ENCODE measurements at regions of chr2 and their contacts with region 1.

Region 1: DNA sequence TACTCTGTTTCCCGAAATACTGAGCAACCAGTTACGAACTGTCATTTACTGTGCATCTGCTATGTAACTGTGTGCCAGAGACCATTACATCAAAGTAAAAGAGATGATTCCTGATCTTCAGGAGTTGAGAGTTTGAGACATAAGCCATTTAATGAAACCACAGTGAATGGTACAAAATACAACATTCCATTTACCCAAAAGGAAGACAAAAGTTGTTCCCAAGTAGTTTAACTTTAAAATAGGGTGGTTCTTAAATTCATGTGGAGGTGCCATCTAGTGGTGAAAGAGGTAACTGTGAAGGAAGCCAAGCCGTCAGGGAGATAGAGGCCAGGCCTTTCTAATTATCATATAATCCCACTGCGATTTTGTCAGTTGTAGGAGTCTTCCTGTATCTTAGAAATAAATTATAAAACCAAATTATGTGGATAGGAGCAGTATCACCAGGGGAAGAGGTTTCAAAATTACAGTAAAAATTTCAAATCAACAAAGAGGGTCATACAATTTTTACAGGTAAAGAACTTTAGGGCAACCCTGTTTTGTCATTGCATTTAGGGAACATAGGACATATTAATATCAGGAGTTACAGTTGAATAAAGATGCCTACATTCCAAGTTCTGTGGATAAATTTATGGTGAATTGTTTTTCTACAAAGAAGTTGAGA is 67.7 kb downstream of the EPAS1 start:
- DNase-seq: peak in 5 of 14 experiments; percentile 14 to 74 (median 64)
- ATAC-seq: peak; percentile 60
- H3K4me3 ChIP-seq: no peak overlapping the region
- H3K4me3 Mint-ChIP-seq: no peak overlapping the region
- H3K27ac ChIP-seq: no peak overlapping the region
- H3K27ac Mint-ChIP-seq: no peak overlapping the region
- H3K4me1 ChIP-seq: peaks cover 12% of the 10 kb centered on the region
- H3K4me1 Mint-ChIP-seq: peaks cover 37% of the 10 kb centered on the region
- H3K27me3 ChIP-seq: no peaks in the 10 kb centered on the region
- H3K27me3 Mint-ChIP-seq: no peaks in the 10 kb centered on the region
- CTCF ChIP-seq: peak; percentile 86

Region 2: GRCh38 chr2:45993476-45993991 is 371.4 kb before region 1 on chr2:
- CTCF ChIA-PET with region 1: interaction called, 3 read pairs
- POLR2A ChIA-PET with region 1: no interaction called
- intact Hi-C with region 1: loop called (anchors 1 to 5 kb)
- DNase-seq: peak in 13 of 14 experiments; percentile 8 to 80 (median 42)
- ATAC-seq: peak; percentile 68
- H3K4me3 ChIP-seq: no peak overlapping the region
- H3K4me3 Mint-ChIP-seq: no peak overlapping the region
- H3K27ac ChIP-seq: no peak overlapping the region
- H3K27ac Mint-ChIP-seq: no peak overlapping the region
- H3K4me1 ChIP-seq: no peaks in the 10 kb centered on the region
- H3K4me1 Mint-ChIP-seq: peaks cover 6% of the 10 kb centered on the region
- H3K27me3 ChIP-seq: no peaks in the 10 kb centered on the region
- H3K27me3 Mint-ChIP-seq: no peaks in the 10 kb centered on the region
- CTCF ChIP-seq: peak; percentile 80

Region 3: GRCh38 chr2:46062637-46063412 is 302.1 kb before region 1 on chr2:
- CTCF ChIA-PET with region 1: interaction called, 3 read pairs
- POLR2A ChIA-PET with region 1: no interaction called
- intact Hi-C with region 1: loop called (anchors 1 kb)
- DNase-seq: peak; percentile 41 to 74 (median 57)
- ATAC-seq: peak; percentile 52
- H3K4me3 ChIP-seq: no peak overlapping the region
- H3K4me3 Mint-ChIP-seq: no peak overlapping the region
- H3K27ac ChIP-seq: no peak overlapping the region
- H3K27ac Mint-ChIP-seq: no peak overlapping the region
- H3K4me1 ChIP-seq: no peaks in the 10 kb centered on the region
- H3K4me1 Mint-ChIP-seq: no peaks in the 10 kb centered on the region
- H3K27me3 ChIP-seq: no peaks in the 10 kb centered on the region
- H3K27me3 Mint-ChIP-seq: no peaks in the 10 kb centered on the region
- CTCF ChIP-seq: peak; percentile 88

Region 4: DNA sequence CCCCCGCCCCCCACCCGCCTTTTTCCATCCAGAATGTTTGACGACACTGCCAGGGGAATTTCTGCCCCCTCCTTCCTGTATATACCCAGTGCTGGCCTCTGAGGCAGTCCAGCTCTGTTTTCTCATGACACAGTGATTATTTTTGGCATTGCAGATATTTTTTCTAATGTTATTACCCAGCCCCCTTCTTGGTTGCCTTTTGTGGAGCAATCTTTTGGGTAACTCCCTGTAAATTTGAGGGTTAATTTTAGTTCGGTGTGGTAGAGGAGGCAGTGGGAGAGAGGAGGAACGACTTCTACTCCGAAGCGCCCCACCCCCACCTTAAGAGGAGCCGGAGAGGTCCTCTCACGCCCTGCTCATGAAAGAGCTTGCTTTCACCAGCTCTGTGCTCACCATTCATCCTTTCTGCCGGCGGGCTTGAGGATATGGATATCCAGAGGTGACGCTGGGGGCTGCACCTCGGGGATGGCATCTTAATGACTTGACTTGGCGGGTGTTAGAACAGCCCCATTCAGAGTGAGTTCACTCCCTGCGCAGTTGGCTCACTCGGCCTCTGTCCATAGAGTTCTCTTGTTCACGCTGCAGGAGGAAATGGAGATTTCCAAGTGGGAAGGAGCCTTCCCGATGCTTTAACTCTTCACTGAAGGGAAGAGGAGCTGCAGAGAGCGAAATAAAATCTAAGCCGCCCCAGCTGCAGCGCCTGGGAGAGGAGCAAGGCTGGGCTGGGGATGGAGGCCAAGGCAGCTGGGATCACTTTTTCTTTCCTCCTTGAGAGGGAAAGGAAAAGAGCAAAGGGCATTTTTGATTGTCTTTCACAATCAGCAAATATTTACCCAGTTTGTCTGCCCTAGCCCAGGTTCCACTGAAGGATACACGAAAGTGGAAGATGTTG is 29.3 kb before region 1 on chr2:
- CTCF ChIA-PET with region 1: no interaction called
- POLR2A ChIA-PET with region 1: interaction called, 6 read pairs
- intact Hi-C with region 1: loop called (anchors 1 kb)
- DNase-seq: no peak
- ATAC-seq: no peak
- H3K4me3 ChIP-seq: no peak overlapping the region
- H3K4me3 Mint-ChIP-seq: no peak overlapping the region
- H3K27ac ChIP-seq: no peak overlapping the region
- H3K27ac Mint-ChIP-seq: no peak overlapping the region
- H3K4me1 ChIP-seq: peaks cover 13% of the 10 kb centered on the region
- H3K4me1 Mint-ChIP-seq: peaks cover 27% of the 10 kb centered on the region
- H3K27me3 ChIP-seq: no peaks in the 10 kb centered on the region
- H3K27me3 Mint-ChIP-seq: no peaks in the 10 kb centered on the region
- CTCF ChIP-seq: no peak